ENCODE measurements at regions of chr21 and their contacts with region 1.

Region 1: GRCh38 chr21:34630536-34631143 is 15.7 kb upstream of the RCAN1 start:
- DNase-seq: peak; percentile 49 to 75 (median 71)
- H3K4me3 ChIP-seq: no peak overlapping the region
- H3K27ac ChIP-seq: no peak overlapping the region
- H3K4me1 ChIP-seq: peaks cover 0 to 7% (median 0%) of the 10 kb centered on the region in 4 experiments
- H3K27me3 ChIP-seq: peaks cover 0 to 9% (median 0%) of the 10 kb centered on the region in 5 experiments

Region 2: GRCh38 chr21:34619841-34620665 is 10.6 kb before region 1 on chr21:
- CTCF ChIA-PET with region 1: interaction called, 17 read pairs
- POLR2A ChIA-PET with region 1: no interaction called
- DNase-seq: no peak
- H3K4me3 ChIP-seq: no peak overlapping the region
- H3K27ac ChIP-seq: no peak overlapping the region
- H3K4me1 ChIP-seq: peaks cover 0 to 11% (median 4%) of the 10 kb centered on the region in 4 experiments
- H3K27me3 ChIP-seq: no peaks in the 10 kb centered on the region

Region 3: DNA sequence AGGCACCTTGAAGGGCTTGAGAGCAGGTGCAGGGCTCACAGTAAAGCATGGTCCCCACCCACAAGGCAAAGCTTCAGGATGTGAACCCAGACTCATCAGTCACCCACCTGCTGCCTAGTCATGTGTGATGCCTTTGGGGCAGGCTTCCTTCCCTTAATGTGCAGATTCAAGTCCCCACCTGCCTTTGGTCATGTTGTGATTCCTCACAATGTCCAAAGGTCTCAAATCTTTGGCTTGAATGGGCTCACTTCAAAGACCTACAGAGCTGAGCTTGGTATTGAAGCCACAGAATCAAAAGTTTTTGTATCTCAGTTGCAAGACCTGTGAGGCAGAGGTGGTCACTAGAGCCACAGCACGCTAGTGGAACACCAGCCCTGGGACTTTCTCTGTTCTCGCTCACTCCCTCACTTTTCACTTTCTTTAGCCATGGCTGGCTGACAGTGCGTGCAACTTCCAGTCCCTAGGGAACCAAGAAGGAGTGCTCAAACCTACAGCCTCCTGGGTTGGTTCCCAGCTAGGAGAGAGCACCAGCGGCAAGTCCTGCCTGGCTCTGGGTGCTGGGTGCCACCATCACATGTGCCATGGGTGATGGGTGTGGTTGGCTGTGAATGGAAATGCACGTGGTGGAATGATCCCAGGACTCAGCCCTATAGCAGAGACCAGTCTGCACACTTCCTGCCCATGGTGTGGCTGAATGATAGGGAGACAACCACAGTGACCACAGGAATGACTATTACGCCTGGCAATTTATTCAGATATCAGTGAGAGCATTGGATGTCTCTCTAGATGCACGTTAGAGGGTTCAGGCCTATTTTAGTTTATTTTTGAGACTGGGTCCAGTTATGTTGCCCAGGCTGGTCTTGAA is 11.8 kb after region 1 on chr21:
- CTCF ChIA-PET with region 1: interaction called, 10 read pairs
- POLR2A ChIA-PET with region 1: no interaction called
- DNase-seq: peak; percentile 29 to 79 (median 74)
- H3K4me3 ChIP-seq: no peak overlapping the region
- H3K27ac ChIP-seq: no peak overlapping the region
- H3K4me1 ChIP-seq: peaks cover 0 to 13% (median 8%) of the 10 kb centered on the region in 4 experiments
- H3K27me3 ChIP-seq: no peaks in the 10 kb centered on the region

Region 4: GRCh38 chr21:34688145-34688544 is 57.5 kb after region 1 on chr21:
- CTCF ChIA-PET with region 1: no interaction called
- POLR2A ChIA-PET with region 1: no interaction called
- DNase-seq: peak in 1 of 3 donors; percentile 36
- H3K4me3 ChIP-seq: no peak overlapping the region
- H3K27ac ChIP-seq: no peak overlapping the region
- H3K4me1 ChIP-seq: peaks cover 0 to 2% (median 0%) of the 10 kb centered on the region in 4 experiments
- H3K27me3 ChIP-seq: peaks cover 0 to 7% (median 2%) of the 10 kb centered on the region in 5 experiments